Endothelial cell of umbilical vein (primary cell): ENCODE measurements at regions of chr5 and their contacts with region 1.

Region 1: GRCh38 chr5:499233-500209 is 24.7 kb downstream of the SLC9A3 start:
- DNase-seq: no peak
- H3K4me3 ChIP-seq: no peak overlapping the region
- H3K27ac ChIP-seq: no peak overlapping the region
- H3K4me1 ChIP-seq: no peaks in the 10 kb centered on the region
- H3K27me3 ChIP-seq: peaks cover 0 to 3% of the 10 kb centered on the region in 2 experiments
- CTCF ChIP-seq: no peak
- POLR2A ChIP-seq: no peak

Region 2: DNA sequence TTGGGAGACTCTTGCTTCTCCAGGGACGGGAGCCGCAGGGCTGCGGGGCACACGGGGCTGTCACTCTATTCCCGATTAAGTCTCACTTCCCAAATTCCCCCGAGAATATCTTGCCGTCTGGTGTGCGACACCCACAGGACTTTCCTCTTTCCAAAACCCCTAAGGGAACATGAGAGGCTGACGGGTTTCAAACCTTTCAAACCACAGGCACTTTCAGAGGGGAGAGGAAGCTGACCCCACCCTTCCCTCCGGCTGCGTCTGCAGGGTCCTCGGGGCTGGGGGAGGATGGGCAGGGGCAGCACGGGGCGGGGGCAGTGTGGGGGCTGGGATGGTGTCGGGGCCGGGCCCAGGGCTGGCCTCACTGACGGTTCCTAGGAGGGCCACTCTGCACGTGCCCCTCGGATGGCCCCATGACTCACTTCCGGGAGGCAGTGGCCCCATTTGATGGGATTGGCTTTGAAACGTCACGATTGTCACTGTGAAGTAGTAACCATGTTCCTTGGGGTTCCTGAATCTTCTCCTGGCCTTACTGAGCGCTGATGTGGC is 13.5 kb before region 1 on chr5:
- CTCF ChIA-PET with region 1: no interaction called
- POLR2A ChIA-PET with region 1: no interaction called
- dilution Hi-C with region 1: no loop called
- intact Hi-C with region 1: loop called (anchors 1 kb)
- DNase-seq: no peak
- H3K4me3 ChIP-seq: no peak overlapping the region
- H3K27ac ChIP-seq: no peak overlapping the region
- H3K4me1 ChIP-seq: no peaks in the 10 kb centered on the region
- H3K27me3 ChIP-seq: peaks cover 0 to 2% of the 10 kb centered on the region in 2 experiments
- CTCF ChIP-seq: no peak
- POLR2A ChIP-seq: no peak

Region 3: GRCh38 chr5:528625-529511 is 29.3 kb after region 1 on chr5:
- CTCF ChIA-PET with region 1: no interaction called
- POLR2A ChIA-PET with region 1: no interaction called
- dilution Hi-C with region 1: no loop called
- intact Hi-C with region 1: no loop called
- DNase-seq: no peak
- H3K4me3 ChIP-seq: no peak overlapping the region
- H3K27ac ChIP-seq: no peak overlapping the region
- H3K4me1 ChIP-seq: no peaks in the 10 kb centered on the region
- H3K27me3 ChIP-seq: peaks cover 42 to 53% of the 10 kb centered on the region in 2 experiments
- CTCF ChIP-seq: no peak
- POLR2A ChIP-seq: no peak